CD8-positive, alpha-beta memory T cell (primary cell): ENCODE measurements at regions of chr9 and their contacts with region 1.

Region 1: GRCh38 chr9:38047301-38048251 is 21.5 kb downstream of the SHB start:
- DNase-seq: no peak
- H3K4me3 ChIP-seq: no peak overlapping the region
- H3K4me3 Mint-ChIP-seq: peak overlapping the region in 1 of 7 donors; percentile 81
- H3K27ac ChIP-seq: peak overlapping the region; percentile 31
- H3K27ac Mint-ChIP-seq: no peak overlapping the region
- H3K4me1 ChIP-seq: no peaks in the 10 kb centered on the region
- H3K4me1 Mint-ChIP-seq: peaks cover 0 to 5% (median 1%) of the 10 kb centered on the region in 3 donors
- H3K27me3 ChIP-seq: no peaks in the 10 kb centered on the region
- H3K27me3 Mint-ChIP-seq: no peaks in the 10 kb centered on the region

Region 2: GRCh38 chr9:38059228-38059936 is 11.8 kb after region 1 on chr9:
- CTCF ChIA-PET with region 1: no interaction called
- POLR2A ChIA-PET with region 1: interaction called, 11 read pairs
- DNase-seq: no peak
- H3K4me3 ChIP-seq: no peak overlapping the region
- H3K4me3 Mint-ChIP-seq: no peak overlapping the region
- H3K27ac ChIP-seq: no peak overlapping the region
- H3K27ac Mint-ChIP-seq: no peak overlapping the region
- H3K4me1 ChIP-seq: no peaks in the 10 kb centered on the region
- H3K4me1 Mint-ChIP-seq: no peaks in the 10 kb centered on the region
- H3K27me3 ChIP-seq: no peaks in the 10 kb centered on the region
- H3K27me3 Mint-ChIP-seq: peaks cover 4 to 5% of the 10 kb centered on the region in 2 donors